MCF 10A (cell line): ENCODE measurements at regions of chr7 and their contacts with region 1.

Region 1: DNA sequence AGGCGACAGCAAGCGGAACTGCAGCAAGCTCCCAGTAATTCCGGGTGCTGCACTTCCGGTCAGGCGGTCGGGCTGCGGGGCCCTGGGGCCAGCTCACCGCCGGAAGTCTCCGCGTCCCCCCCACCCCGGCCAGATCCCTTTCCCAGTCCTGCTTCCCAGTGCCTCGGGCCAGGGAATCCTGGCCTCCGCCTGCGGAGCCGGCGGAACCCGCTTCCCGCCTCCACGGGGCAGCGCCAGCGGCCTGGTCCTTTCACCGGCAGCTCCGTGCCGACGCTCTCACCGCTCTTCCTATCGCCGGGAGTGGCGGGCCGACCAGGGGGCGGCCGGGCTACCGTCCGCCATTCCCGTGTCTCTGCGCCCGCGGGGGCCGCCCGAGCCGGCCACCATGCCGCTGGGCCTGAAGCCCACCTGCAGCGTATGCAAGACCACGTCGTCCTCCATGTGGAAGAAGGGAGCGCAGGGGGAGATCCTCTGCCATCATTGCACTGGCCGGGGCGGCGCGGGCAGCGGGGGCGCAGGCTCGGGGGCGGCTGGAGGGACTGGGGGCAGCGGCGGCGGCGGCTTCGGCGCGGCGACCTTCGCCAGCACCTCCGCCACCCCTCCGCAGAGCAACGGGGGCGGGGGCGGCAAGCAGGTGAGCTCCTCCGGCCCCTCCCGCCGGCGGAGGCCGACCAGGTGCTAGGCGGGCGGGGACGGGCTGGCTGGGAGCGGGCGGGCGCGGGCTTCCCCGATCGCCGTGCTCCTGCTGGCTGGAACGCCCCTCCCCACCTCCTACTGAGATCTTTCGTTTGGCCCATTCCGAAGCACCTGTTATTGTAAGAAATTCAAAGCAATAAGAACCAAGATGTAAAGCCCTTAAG is at the start of gene GATAD1:
- DNase-seq: peak; percentile 93
- H3K4me3 Mint-ChIP-seq: peak within 1 kb of the TSS; percentile 85
- H3K27ac Mint-ChIP-seq: peak within 1 kb of the TSS; percentile 89
- H3K4me1 Mint-ChIP-seq: no peaks in the 10 kb centered on the region
- H3K27me3 Mint-ChIP-seq: no peaks in the 10 kb centered on the region
- CTCF ChIP-seq: peak; percentile 88
- total RNA-seq, gene GATAD1: 41.2 and 44.2 TPM in 2 replicates

Region 2: DNA sequence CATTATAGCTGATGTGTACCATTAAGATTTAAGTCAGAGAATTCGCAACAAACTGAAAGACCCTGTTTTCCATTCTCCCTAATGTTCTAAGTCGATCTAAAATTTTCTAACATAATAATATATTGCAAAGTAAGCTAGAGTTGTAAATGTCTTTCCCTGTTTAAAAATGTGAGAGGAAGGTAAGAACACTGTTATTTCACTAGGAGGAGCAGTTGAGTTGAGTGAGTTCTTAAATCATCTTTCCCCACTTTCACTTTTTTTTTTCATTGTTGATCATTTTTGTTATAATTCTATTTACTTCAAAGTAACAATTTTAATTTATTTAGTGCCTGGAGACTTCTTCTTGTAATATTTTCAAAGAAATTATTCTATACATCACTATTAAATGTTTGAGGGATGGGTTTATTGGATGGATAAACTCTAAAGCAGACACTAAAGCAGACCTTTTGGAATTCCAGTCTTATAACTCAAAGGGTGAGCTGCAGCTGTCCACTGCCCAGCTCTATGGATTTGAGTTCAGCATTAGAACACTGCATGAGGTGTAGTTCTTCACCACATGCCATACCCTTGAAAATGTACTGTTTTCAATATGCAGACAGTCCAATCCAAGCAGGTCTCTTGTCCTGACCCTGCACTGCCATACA is 1364.6 kb before region 1 on chr7:
- CTCF ChIA-PET with region 1: interaction called, 3 read pairs
- POLR2A ChIA-PET with region 1: interaction called, 3 read pairs
- intact Hi-C with region 1: loop called (anchors 5 kb)
- DNase-seq: peak; percentile 36
- H3K4me3 Mint-ChIP-seq: no peak overlapping the region
- H3K27ac Mint-ChIP-seq: no peak overlapping the region
- H3K4me1 Mint-ChIP-seq: no peaks in the 10 kb centered on the region
- H3K27me3 Mint-ChIP-seq: no peaks in the 10 kb centered on the region
- CTCF ChIP-seq: peak; percentile 62

Region 3: GRCh38 chr7:91940572-91941341 is 506.8 kb before region 1 on chr7 and contains the start of gene AKAP9:
- CTCF ChIA-PET with region 1: no interaction called
- POLR2A ChIA-PET with region 1: interaction called, 16 read pairs
- intact Hi-C with region 1: no loop called
- DNase-seq: peak; percentile 88
- H3K4me3 Mint-ChIP-seq: peak within 1 kb of the TSS; percentile 86
- H3K27ac Mint-ChIP-seq: peak within 1 kb of the TSS; percentile 93
- H3K4me1 Mint-ChIP-seq: peaks cover 11% of the 10 kb centered on the region
- H3K27me3 Mint-ChIP-seq: no peaks in the 10 kb centered on the region
- CTCF ChIP-seq: no peak
- total RNA-seq, gene AKAP9: 36.8 and 39.2 TPM in 2 replicates

Region 4: DNA sequence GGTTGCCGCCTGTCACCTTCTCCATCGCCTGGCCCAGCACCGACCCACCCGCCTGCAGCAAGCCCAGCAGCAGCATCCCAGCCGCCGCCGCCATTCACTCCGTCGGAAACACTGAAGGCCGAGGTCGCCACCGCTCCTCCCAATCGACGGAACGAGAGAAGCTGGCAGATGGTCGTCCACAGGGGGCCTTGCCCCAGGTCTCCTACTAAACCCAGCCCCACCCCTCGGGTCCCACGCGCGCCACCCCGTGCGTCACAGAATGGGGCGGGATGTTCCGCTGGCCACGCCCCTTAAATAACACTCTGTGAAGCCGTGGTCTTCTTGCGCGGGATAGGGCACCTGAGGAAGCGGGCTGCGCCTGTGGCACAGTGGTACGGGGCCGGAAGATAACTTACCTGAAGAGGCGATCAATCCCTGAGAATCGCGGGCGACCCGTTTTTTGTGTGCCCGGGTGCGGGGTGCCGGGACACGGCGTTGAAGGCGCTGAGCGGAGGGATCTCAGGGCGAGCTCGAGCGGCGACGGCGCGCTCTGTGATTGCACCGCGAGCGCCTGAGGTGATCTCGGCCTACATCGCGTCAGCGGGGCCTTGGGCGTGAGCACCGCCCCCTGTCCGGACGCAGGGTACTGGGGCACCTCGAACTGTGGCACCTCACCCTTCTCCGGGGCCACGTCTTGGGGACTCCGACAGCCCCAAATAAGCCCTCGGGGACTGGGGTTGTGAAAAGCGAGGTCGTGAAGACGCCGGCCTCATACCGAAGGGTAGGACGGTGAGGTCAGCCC is 313.1 kb before region 1 on chr7 and contains the start of gene CYP51A1:
- CTCF ChIA-PET with region 1: interaction called, 7 read pairs
- POLR2A ChIA-PET with region 1: interaction called, 27 read pairs
- intact Hi-C with region 1: loop called (anchors 1 kb)
- DNase-seq: peak; percentile 94
- H3K4me3 Mint-ChIP-seq: peak within 1 kb of the TSS; percentile 90
- H3K27ac Mint-ChIP-seq: peak within 1 kb of the TSS; percentile 98
- H3K4me1 Mint-ChIP-seq: peaks cover 27% of the 10 kb centered on the region
- H3K27me3 Mint-ChIP-seq: no peaks in the 10 kb centered on the region
- CTCF ChIP-seq: no peak
- total RNA-seq, gene CYP51A1: 124 and 148 TPM in 2 replicates

Region 5: DNA sequence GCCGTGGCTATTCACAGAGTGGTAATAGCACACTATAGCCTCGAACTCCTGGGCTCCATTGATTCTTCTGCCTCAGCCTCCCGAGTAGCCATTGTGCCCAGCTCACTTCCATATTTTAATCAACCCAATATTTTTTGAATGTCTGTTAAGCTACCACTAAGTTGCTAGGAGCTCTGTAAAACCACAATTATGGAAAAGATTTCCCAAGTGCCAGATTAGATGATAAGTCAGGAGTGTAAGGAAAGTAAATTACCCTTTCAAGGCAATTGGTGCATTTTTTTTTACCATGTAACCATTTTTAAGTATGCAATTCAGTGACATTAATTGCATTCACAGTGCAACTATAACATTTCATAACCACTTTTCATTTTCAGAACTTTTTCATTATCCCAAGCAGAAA is 87.8 kb before region 1 on chr7:
- CTCF ChIA-PET with region 1: no interaction called
- POLR2A ChIA-PET with region 1: no interaction called
- intact Hi-C with region 1: no loop called
- DNase-seq: no peak
- H3K4me3 Mint-ChIP-seq: no peak overlapping the region
- H3K27ac Mint-ChIP-seq: no peak overlapping the region
- H3K4me1 Mint-ChIP-seq: no peaks in the 10 kb centered on the region
- H3K27me3 Mint-ChIP-seq: no peaks in the 10 kb centered on the region
- CTCF ChIP-seq: no peak

Region 6: GRCh38 chr7:92425321-92425947 is 22.1 kb before region 1 on chr7:
- CTCF ChIA-PET with region 1: interaction called, 42 read pairs
- POLR2A ChIA-PET with region 1: interaction called, 14 read pairs
- intact Hi-C with region 1: loop called (anchors 1 kb)
- DNase-seq: no peak
- H3K4me3 Mint-ChIP-seq: no peak overlapping the region
- H3K27ac Mint-ChIP-seq: no peak overlapping the region
- H3K4me1 Mint-ChIP-seq: peaks cover 5% of the 10 kb centered on the region
- H3K27me3 Mint-ChIP-seq: no peaks in the 10 kb centered on the region
- CTCF ChIP-seq: no peak

Region 7: GRCh38 chr7:92461027-92462003 is 13.7 kb after region 1 on chr7:
- CTCF ChIA-PET with region 1: interaction called, 27 read pairs
- POLR2A ChIA-PET with region 1: interaction called, 21 read pairs
- intact Hi-C with region 1: no loop called
- DNase-seq: peak; percentile 49
- H3K4me3 Mint-ChIP-seq: no peak overlapping the region
- H3K27ac Mint-ChIP-seq: no peak overlapping the region
- H3K4me1 Mint-ChIP-seq: peaks cover 11% of the 10 kb centered on the region
- H3K27me3 Mint-ChIP-seq: no peaks in the 10 kb centered on the region
- CTCF ChIP-seq: peak; percentile 62

Region 8: GRCh38 chr7:92751902-92752901 is 304.6 kb after region 1 on chr7:
- CTCF ChIA-PET with region 1: no interaction called
- POLR2A ChIA-PET with region 1: no interaction called
- intact Hi-C with region 1: no loop called
- DNase-seq: peak; percentile 87
- H3K4me3 Mint-ChIP-seq: peak overlapping the region; percentile 38
- H3K27ac Mint-ChIP-seq: peak overlapping the region; percentile 83
- H3K4me1 Mint-ChIP-seq: peaks cover 48% of the 10 kb centered on the region
- H3K27me3 Mint-ChIP-seq: no peaks in the 10 kb centered on the region
- CTCF ChIP-seq: no peak